A673 (cell line): ENCODE measurements at regions of chr20 and their contacts with region 1.

Region 1: GRCh38 chr20:41352108-41352507 is 11.5 kb downstream of the LPIN3 start:
- DNase-seq: no peak
- H3K4me3 ChIP-seq: no peak overlapping the region
- H3K27ac ChIP-seq: no peak overlapping the region
- H3K4me1 ChIP-seq: no peaks in the 10 kb centered on the region
- H3K27me3 ChIP-seq: no peaks in the 10 kb centered on the region
- CTCF ChIP-seq: 0 out of 2 replicates have a peak, but pooled peaks have one; percentile 20

Region 2: GRCh38 chr20:39446397-39446796 is 1905.7 kb before region 1 on chr20:
- CTCF ChIA-PET with region 1: no interaction called
- POLR2A ChIA-PET with region 1: interaction called, 11 read pairs
- intact Hi-C with region 1: no loop called
- DNase-seq: no peak
- H3K4me3 ChIP-seq: no peak overlapping the region
- H3K27ac ChIP-seq: no peak overlapping the region
- H3K4me1 ChIP-seq: no peaks in the 10 kb centered on the region
- H3K27me3 ChIP-seq: peaks cover 8% of the 10 kb centered on the region
- CTCF ChIP-seq: no peak

Region 3: GRCh38 chr20:41287327-41287726 is 64.8 kb before region 1 on chr20:
- CTCF ChIA-PET with region 1: no interaction called
- POLR2A ChIA-PET with region 1: no interaction called
- intact Hi-C with region 1: no loop called
- DNase-seq: no peak
- H3K4me3 ChIP-seq: no peak overlapping the region
- H3K27ac ChIP-seq: no peak overlapping the region
- H3K4me1 ChIP-seq: no peaks in the 10 kb centered on the region
- H3K27me3 ChIP-seq: no peaks in the 10 kb centered on the region
- CTCF ChIP-seq: no peak

Region 4: GRCh38 chr20:41462372-41463161 is 110.5 kb after region 1 on chr20:
- CTCF ChIA-PET with region 1: no interaction called
- POLR2A ChIA-PET with region 1: no interaction called
- intact Hi-C with region 1: no loop called
- DNase-seq: no peak
- H3K4me3 ChIP-seq: no peak overlapping the region
- H3K27ac ChIP-seq: no peak overlapping the region
- H3K4me1 ChIP-seq: peaks cover 4% of the 10 kb centered on the region
- H3K27me3 ChIP-seq: no peaks in the 10 kb centered on the region
- CTCF ChIP-seq: no peak